Head of caudate nucleus (tissue), 42 donors: ENCODE measurements at regions of chr11 and their contacts with region 1.

Region 1: GRCh38 chr11:8566613-8567210 is 27.3 kb downstream of the STK33 start:
- DNase-seq: no peak

Region 2: GRCh38 chr11:8258784-8259183 is 307.9 kb before region 1 on chr11:
- intact Hi-C with region 1: no loop called
- DNase-seq: peak in 6 of 42 donors; percentile 8 to 32 (median 18)

Region 3: GRCh38 chr11:8338138-8338537 is 228.6 kb before region 1 on chr11:
- intact Hi-C with region 1: loop called (anchors 10 kb)
- DNase-seq: peak; percentile 14 to 81 (median 58)